HEK293 (cell line): ENCODE measurements at regions of chr22 and their contacts with region 1.

Region 1: GRCh38 chr22:34414484-34415440 is 494.5 kb upstream of the LARGE1 start:
- H3K4me3 ChIP-seq: no peak overlapping the region
- H3K27ac ChIP-seq: no peak overlapping the region
- H3K4me1 ChIP-seq: no peaks in the 10 kb centered on the region
- CTCF ChIP-seq: no peak

Region 2: GRCh38 chr22:34303656-34304055 is 111.1 kb before region 1 on chr22:
- CTCF ChIA-PET with region 1: no interaction called
- POLR2A ChIA-PET with region 1: no interaction called
- H3K4me3 ChIP-seq: no peak overlapping the region
- H3K27ac ChIP-seq: no peak overlapping the region
- H3K4me1 ChIP-seq: no peaks in the 10 kb centered on the region
- CTCF ChIP-seq: no peak

Region 3: GRCh38 chr22:34437140-34437539 is 22.4 kb after region 1 on chr22:
- CTCF ChIA-PET with region 1: interaction called, 10 read pairs
- POLR2A ChIA-PET with region 1: no interaction called
- H3K4me3 ChIP-seq: no peak overlapping the region
- H3K27ac ChIP-seq: no peak overlapping the region
- H3K4me1 ChIP-seq: no peaks in the 10 kb centered on the region
- CTCF ChIP-seq: no peak

Region 4: GRCh38 chr22:34493486-34493885 is 78.7 kb after region 1 on chr22:
- CTCF ChIA-PET with region 1: no interaction called
- POLR2A ChIA-PET with region 1: no interaction called
- H3K4me3 ChIP-seq: no peak overlapping the region
- H3K27ac ChIP-seq: no peak overlapping the region
- H3K4me1 ChIP-seq: no peaks in the 10 kb centered on the region
- CTCF ChIP-seq: no peak

Region 5: GRCh38 chr22:34696557-34696956 is 281.8 kb after region 1 on chr22:
- CTCF ChIA-PET with region 1: no interaction called
- POLR2A ChIA-PET with region 1: no interaction called
- H3K4me3 ChIP-seq: no peak overlapping the region
- H3K27ac ChIP-seq: no peak overlapping the region
- H3K4me1 ChIP-seq: no peaks in the 10 kb centered on the region
- CTCF ChIP-seq: no peak